ENCODE measurements at regions of chr20 and their contacts with region 1.

Region 1: GRCh38 chr20:33694639-33695012 is 8.4 kb upstream of the E2F1 start:
- DNase-seq: no peak
- H3K4me3 ChIP-seq: no peak overlapping the region
- H3K27ac ChIP-seq: no peak overlapping the region
- H3K4me1 ChIP-seq: peaks cover 9% of the 10 kb centered on the region
- H3K27me3 ChIP-seq: no peaks in the 10 kb centered on the region
- CTCF ChIP-seq: no peak

Region 2: GRCh38 chr20:33674295-33675135 is 20.1 kb before region 1 on chr20 and contains the start of gene NECAB3:
- CTCF ChIA-PET with region 1: no interaction called
- POLR2A ChIA-PET with region 1: interaction called, 21 read pairs
- intact Hi-C with region 1: no loop called
- DNase-seq: peak in 1 of 2 experiments; percentile 90
- H3K4me3 ChIP-seq: peak within 1 kb of the TSS; percentile 96
- H3K27ac ChIP-seq: peak within 1 kb of the TSS; percentile 48
- H3K4me1 ChIP-seq: peaks cover 16% of the 10 kb centered on the region; the same call in 1 of the 2 replicates
- H3K27me3 ChIP-seq: no peaks in the 10 kb centered on the region
- CTCF ChIP-seq: no peak
- total RNA-seq, gene NECAB3: 72.1 and 77.7 TPM in 2 replicates